ENCODE measurements at regions of chr12 and their contacts with region 1.

Region 1: DNA sequence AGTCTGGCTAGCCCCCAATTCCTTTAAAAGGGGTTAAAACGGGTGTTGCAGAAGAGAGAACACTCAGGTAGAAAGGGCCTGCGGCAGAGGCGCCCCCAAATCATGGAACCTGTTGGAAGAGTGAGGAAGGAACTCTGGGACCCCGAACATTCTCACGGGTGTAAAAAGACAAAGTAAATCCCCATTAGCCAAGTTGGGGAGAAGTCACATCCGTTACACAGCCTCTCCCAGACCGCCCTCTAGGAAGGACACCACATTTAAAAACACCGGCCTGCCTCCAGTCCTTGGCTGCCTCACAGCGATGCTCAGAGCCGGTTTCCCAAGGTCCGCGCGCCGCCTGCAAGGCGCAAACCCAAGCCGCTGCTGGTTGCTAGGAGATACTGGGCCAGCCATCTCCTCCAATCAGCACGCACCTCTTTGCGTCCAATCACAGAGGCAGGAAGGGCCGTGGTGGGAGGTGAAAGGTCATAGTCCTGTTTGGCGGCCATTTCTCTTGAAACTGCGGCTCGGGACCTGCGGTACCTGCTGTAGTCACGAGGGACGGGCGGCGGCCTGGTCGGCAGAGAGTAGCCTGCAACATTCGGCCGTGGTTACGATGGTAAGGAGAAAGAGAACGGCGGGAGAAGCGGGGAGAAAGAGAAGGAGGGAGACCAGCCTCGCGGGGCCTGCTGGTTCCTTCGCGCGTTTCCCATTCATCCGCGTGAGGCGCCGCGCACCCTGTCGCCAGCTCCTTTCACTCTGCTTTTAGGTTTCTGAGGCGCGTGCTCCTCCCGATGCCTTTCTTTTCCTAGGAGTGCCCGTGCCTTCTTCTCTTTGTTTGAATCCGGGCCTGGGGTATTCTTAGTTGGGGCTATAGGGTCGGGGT is at the start of gene SNRPF:
- DNase-seq: peak; percentile 97 to 100 (median 100)
- ATAC-seq: peak; percentile 96
- H3K4me3 ChIP-seq: peak within 1 kb of the TSS; percentile 78
- H3K27ac ChIP-seq: peak within 1 kb of the TSS; percentile 92
- H3K4me1 ChIP-seq: peaks cover 0 to 7% of the 10 kb centered on the region in 2 experiments; a peak in 3 of 5 replicates
- H3K27me3 ChIP-seq: no peaks in the 10 kb centered on the region; a peak in 1 of 5 replicates
- CTCF ChIP-seq: peak in 2 of 3 experiments; percentile 9 to 36; a peak in 1 of 6 replicates
- EP300 ChIP-seq: no peak
- POLR2A ChIP-seq: peak; percentile 90
- RAD21 ChIP-seq: no peak
- polyA plus RNA-seq, gene SNRPF: 181 to 205 TPM

Region 2: GRCh38 chr12:95870897-95871296 is 12.2 kb after region 1 on chr12:
- CTCF ChIA-PET with region 1: no interaction called
- POLR2A ChIA-PET with region 1: interaction called, 14 read pairs
- in situ Hi-C with region 1: no loop called
- intact Hi-C with region 1: no loop called
- DNase-seq: no peak
- ATAC-seq: no peak
- H3K4me3 ChIP-seq: no peak overlapping the region
- H3K27ac ChIP-seq: no peak overlapping the region
- H3K4me1 ChIP-seq: no peaks in the 10 kb centered on the region
- H3K27me3 ChIP-seq: no peaks in the 10 kb centered on the region
- CTCF ChIP-seq: no peak
- EP300 ChIP-seq: no peak
- POLR2A ChIP-seq: no peak
- RAD21 ChIP-seq: no peak

Region 3: GRCh38 chr12:95877622-95878021 is 18.9 kb after region 1 on chr12:
- CTCF ChIA-PET with region 1: no interaction called
- POLR2A ChIA-PET with region 1: interaction called, 14 read pairs
- in situ Hi-C with region 1: no loop called
- intact Hi-C with region 1: no loop called
- DNase-seq: peak in 2 of 4 experiments; percentile 18 to 24
- ATAC-seq: peak; percentile 73
- H3K4me3 ChIP-seq: no peak overlapping the region
- H3K27ac ChIP-seq: no peak overlapping the region
- H3K4me1 ChIP-seq: peaks cover 0 to 6% of the 10 kb centered on the region in 2 experiments; a peak in 2 of 5 replicates
- H3K27me3 ChIP-seq: no peaks in the 10 kb centered on the region
- CTCF ChIP-seq: no peak
- EP300 ChIP-seq: no peak
- POLR2A ChIP-seq: no peak
- RAD21 ChIP-seq: 0 out of 4 replicates have a peak, but pooled peaks of 1 of the 2 experiments have one; percentile 10

Region 4: GRCh38 chr12:96044017-96044942 is 185.6 kb after region 1 on chr12:
- CTCF ChIA-PET with region 1: no interaction called
- POLR2A ChIA-PET with region 1: no interaction called
- in situ Hi-C with region 1: no loop called
- intact Hi-C with region 1: loop called (anchors 2 kb)
- DNase-seq: no peak
- ATAC-seq: no peak
- H3K4me3 ChIP-seq: no peak overlapping the region
- H3K27ac ChIP-seq: no peak overlapping the region
- H3K4me1 ChIP-seq: peaks cover 0 to 29% of the 10 kb centered on the region in 2 experiments; a peak in 4 of 5 replicates
- H3K27me3 ChIP-seq: no peaks in the 10 kb centered on the region
- CTCF ChIP-seq: no peak
- EP300 ChIP-seq: no peak
- POLR2A ChIP-seq: no peak
- RAD21 ChIP-seq: no peak